SK-MEL-5 (cell line): ENCODE measurements at regions of chr12 and their contacts with region 1.

Region 1: GRCh38 chr12:120110550-120111501 is 5.7 kb downstream of the RAB35 start:
- DNase-seq: no peak

Region 2: GRCh38 chr12:120048263-120048662 is 62.6 kb before region 1 on chr12:
- in situ Hi-C with region 1: loop called (anchors 5 kb)
- DNase-seq: no peak